Transverse colon (tissue), 4 donors: ENCODE measurements at regions of chr16 and their contacts with region 1.

Region 1: DNA sequence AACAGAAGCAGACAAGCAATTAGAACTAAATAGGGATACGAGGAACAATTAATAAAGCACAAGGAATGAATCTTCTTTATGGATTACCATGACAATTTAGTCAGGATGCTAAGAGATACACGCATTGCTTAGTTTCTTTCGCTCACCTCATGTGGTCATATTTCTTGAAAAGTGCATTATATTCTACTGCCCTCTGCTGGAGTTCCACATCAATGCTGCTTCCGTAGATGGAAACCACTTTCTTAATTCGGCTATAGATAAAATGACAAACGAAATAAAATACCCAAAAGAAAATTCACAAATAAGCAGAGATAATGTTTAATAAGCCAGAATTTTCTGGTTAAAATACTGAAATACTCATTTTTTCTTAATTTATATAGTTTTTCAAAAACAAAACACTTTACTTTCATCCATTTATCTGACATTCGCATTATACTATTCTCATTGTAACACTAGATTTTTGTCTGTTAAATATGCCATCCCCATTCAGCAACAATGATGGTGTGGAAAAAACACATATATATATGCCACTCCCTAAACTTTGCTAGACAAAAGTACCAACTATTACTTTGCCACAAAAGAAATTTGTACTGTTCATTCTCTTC is 22.0 kb upstream of the PHLPP2 start:
- DNase-seq: no peak
- H3K4me3 ChIP-seq: no peak overlapping the region
- H3K27ac ChIP-seq: no peak overlapping the region
- H3K4me1 ChIP-seq: no peaks in the 10 kb centered on the region
- H3K27me3 ChIP-seq: no peaks in the 10 kb centered on the region
- CTCF ChIP-seq: peak; percentile 68 to 74 (median 72)
- EP300 ChIP-seq: no peak
- POLR2A ChIP-seq: no peak

Region 2: DNA sequence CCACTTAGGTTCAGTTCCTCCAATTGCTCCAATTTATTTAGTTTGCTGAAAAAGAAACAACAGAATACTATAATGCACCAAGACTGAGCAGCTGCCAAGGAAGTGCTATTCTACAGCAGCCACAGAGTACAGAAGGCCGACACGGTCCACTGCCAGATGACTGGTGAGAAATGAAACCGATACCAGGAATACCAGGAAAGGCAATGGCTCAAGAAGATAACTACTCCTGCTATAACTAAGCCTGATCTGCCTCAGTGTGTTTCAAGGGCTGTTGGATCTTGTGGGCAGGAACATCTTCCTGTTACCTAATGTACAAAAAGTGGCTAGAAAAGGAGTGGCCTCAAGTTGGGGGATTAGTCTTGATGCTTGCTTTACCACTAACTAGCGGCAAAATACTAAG is 87.8 kb before region 1 on chr16:
- in situ Hi-C with region 1: loop called in 1 of 4 experiments (anchors 10 kb)
- intact Hi-C with region 1: no loop called
- DNase-seq: peak; percentile 21
- H3K4me3 ChIP-seq: no peak overlapping the region
- H3K27ac ChIP-seq: no peak overlapping the region
- H3K4me1 ChIP-seq: no peaks in the 10 kb centered on the region
- H3K27me3 ChIP-seq: no peaks in the 10 kb centered on the region
- CTCF ChIP-seq: no peak
- EP300 ChIP-seq: no peak
- POLR2A ChIP-seq: no peak

Region 3: GRCh38 chr16:71794943-71795342 is 48.4 kb after region 1 on chr16:
- in situ Hi-C with region 1: no loop called
- intact Hi-C with region 1: no loop called
- DNase-seq: no peak
- H3K4me3 ChIP-seq: no peak overlapping the region
- H3K27ac ChIP-seq: no peak overlapping the region
- H3K4me1 ChIP-seq: peaks cover 7 to 42% (median 12%) of the 10 kb centered on the region in 4 donors
- H3K27me3 ChIP-seq: no peaks in the 10 kb centered on the region
- CTCF ChIP-seq: no peak
- EP300 ChIP-seq: no peak
- POLR2A ChIP-seq: no peak

Region 4: DNA sequence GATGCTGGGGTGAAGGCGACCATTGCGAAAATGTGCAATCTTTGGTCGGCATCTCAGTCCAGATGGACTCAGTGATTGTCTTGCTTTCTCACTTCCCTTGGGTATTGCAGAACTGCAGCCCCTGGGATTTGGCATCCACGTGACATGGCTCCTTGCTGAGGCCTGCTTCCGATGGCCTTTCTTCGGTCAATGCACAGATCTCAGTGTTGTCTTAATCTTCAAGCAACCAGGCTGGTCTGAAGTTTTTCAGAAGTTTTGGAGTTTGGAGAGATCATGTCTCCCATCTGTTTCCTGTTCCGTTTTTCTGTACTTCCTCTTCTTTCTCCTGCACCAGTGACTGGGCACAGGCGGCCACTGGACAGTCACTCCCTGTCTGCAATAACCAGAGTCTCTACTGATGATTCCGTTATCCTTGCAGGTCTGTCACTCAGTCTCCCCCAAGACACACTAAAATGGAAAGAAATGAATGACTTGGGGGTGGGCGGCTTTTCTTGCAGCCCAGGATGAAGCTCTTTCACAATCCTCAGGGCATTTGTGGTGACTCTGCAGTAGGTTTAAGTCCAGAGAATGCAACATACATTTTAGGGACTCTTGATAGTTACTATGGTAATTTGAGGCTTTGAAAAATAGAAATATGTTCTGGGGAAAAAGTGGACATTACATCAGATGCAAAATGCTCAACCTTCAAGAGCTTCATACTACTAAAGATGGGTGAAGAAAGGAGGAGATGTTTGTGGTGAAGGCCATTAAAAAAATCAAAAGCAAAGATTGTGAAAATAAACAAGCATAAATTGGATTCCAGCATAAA is 1407.7 kb after region 1 on chr16:
- in situ Hi-C with region 1: no loop called
- intact Hi-C with region 1: loop called (anchors 5 kb)
- DNase-seq: no peak
- H3K4me3 ChIP-seq: no peak overlapping the region
- H3K27ac ChIP-seq: peak overlapping the region; percentile 28 to 60 (median 44)
- H3K4me1 ChIP-seq: peaks cover 0 to 3% (median 0%) of the 10 kb centered on the region in 4 donors
- H3K27me3 ChIP-seq: no peaks in the 10 kb centered on the region
- CTCF ChIP-seq: no peak
- EP300 ChIP-seq: no peak
- POLR2A ChIP-seq: peak; percentile 19